ENCODE measurements at regions of chr1 and their contacts with region 1.

Region 1: GRCh38 chr1:55611123-55611522 is 396.0 kb upstream of the USP24 start:
- DNase-seq: no peak
- ATAC-seq: no peak
- H3K4me3 ChIP-seq: no peak overlapping the region
- H3K27ac ChIP-seq: no peak overlapping the region
- H3K4me1 ChIP-seq: no peaks in the 10 kb centered on the region
- H3K27me3 ChIP-seq: no peaks in the 10 kb centered on the region
- CTCF ChIP-seq: no peak

Region 2: GRCh38 chr1:55559161-55559611 is 51.9 kb before region 1 on chr1:
- intact Hi-C with region 1: loop called in 1 of 10 experiments (anchors 10 kb)
- DNase-seq: no peak
- ATAC-seq: no peak
- H3K4me3 ChIP-seq: no peak overlapping the region
- H3K27ac ChIP-seq: no peak overlapping the region
- H3K4me1 ChIP-seq: peaks cover 0 to 3% (median 0%) of the 10 kb centered on the region in 9 donors
- H3K27me3 ChIP-seq: no peaks in the 10 kb centered on the region
- CTCF ChIP-seq: no peak

Measured in heart right ventricle (tissue), 16 donors.